ENCODE measurements at regions of chr5 and their contacts with region 1.

Region 1: DNA sequence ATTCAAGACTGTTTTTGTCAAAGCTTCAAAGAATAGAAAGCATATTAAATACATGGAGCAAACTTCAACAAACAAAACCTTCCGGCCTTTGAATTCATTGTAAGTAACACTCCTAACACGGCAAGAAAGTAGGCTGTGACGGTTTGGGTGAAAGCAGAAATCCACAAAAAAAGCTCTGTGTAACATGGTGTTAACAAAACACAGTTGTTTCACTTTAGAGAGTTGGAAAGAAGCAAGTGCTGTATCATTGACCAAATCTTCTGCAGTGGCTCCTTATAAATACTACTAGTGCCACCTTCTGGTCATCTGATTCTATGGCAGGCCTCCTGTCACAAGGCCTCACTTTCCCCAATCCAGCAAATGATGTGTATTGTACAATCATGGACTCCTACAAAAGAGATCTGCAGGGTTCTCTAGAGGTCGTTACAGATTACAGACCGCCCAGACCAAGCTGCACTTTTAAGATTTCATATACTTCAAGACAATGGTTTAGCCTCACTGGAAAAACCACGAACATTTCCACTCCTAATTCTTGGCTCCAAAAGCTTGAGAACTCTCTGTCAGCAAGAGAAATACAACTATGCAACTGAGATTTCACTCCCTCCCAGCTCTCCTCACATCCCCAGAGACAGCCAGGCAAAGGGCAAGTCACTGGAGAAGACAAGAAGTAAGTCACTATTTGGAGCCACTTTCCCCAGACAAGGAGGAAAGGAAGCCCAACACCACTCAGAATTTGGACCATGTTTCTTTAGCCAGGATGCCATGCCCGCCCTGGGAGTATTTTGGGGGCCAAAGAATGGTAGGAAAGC is 196.2 kb downstream of the DTWD2 start:
- DNase-seq: peak; percentile 50
- H3K4me3 ChIP-seq: peak overlapping the region; percentile 21; the same call in 1 of the 2 replicates
- H3K27ac ChIP-seq: no peak overlapping the region
- H3K27me3 ChIP-seq: no peaks in the 10 kb centered on the region
- CTCF ChIP-seq: peak; percentile 79

Region 2: GRCh38 chr5:118775799-118776499 is 16.2 kb before region 1 on chr5:
- CTCF ChIA-PET with region 1: interaction called, 23 read pairs
- POLR2A ChIA-PET with region 1: no interaction called
- DNase-seq: no peak
- H3K4me3 ChIP-seq: no peak overlapping the region
- H3K27ac ChIP-seq: no peak overlapping the region
- H3K27me3 ChIP-seq: no peaks in the 10 kb centered on the region
- CTCF ChIP-seq: no peak

Region 3: GRCh38 chr5:118802335-118802734 is 10.2 kb after region 1 on chr5:
- CTCF ChIA-PET with region 1: interaction called, 16 read pairs
- POLR2A ChIA-PET with region 1: no interaction called
- DNase-seq: no peak
- H3K4me3 ChIP-seq: no peak overlapping the region
- H3K27ac ChIP-seq: no peak overlapping the region
- H3K27me3 ChIP-seq: no peaks in the 10 kb centered on the region
- CTCF ChIP-seq: no peak

Region 4: GRCh38 chr5:118891252-118891651 is 99.1 kb after region 1 on chr5:
- CTCF ChIA-PET with region 1: no interaction called
- POLR2A ChIA-PET with region 1: no interaction called
- DNase-seq: no peak
- H3K4me3 ChIP-seq: no peak overlapping the region
- H3K27ac ChIP-seq: no peak overlapping the region
- H3K27me3 ChIP-seq: no peaks in the 10 kb centered on the region
- CTCF ChIP-seq: no peak

Region 5: GRCh38 chr5:118956727-118957126 is 164.6 kb after region 1 on chr5:
- CTCF ChIA-PET with region 1: interaction called, 23 read pairs
- POLR2A ChIA-PET with region 1: no interaction called
- DNase-seq: no peak
- H3K4me3 ChIP-seq: no peak overlapping the region
- H3K27ac ChIP-seq: no peak overlapping the region
- H3K27me3 ChIP-seq: no peaks in the 10 kb centered on the region
- CTCF ChIP-seq: peak; percentile 45

Measured in AG04450 (cell line).